ENCODE measurements at regions of chr17 and their contacts with region 1.

Region 1: DNA sequence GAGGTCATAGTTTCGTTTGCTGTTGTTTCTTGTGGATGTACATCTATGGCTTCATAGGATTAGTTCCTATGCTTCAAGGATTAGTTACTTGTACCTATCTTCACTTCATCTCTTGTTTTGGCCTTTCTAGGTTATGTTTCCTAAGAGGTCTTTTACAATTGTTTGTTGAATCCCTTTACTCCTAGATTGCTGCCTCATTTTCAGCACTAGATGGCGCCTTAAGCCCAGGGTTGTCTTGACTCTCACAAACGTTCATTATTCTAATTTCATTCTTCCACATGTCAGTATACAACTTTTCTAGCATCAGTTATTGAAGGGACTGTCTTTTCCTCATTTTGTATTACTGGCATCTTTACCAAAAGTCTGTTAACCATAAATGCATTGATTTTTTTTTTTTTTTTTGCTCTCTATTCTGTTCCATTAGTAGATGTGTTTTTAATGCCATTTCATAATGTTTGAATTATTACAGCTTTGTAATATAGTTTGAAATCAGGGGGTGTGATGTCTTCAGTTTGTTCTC is 45.0 kb upstream of the NACA2 start:
- DNase-seq: no peak
- H3K4me3 ChIP-seq: no peak overlapping the region
- CTCF ChIP-seq: peak; percentile 62

Region 2: GRCh38 chr17:61617330-61617729 is 18.6 kb before region 1 on chr17:
- CTCF ChIA-PET with region 1: interaction called, 10 read pairs
- POLR2A ChIA-PET with region 1: no interaction called
- DNase-seq: no peak
- H3K4me3 ChIP-seq: no peak overlapping the region
- CTCF ChIP-seq: no peak

Region 3: GRCh38 chr17:61647047-61647446 is 11.1 kb after region 1 on chr17:
- CTCF ChIA-PET with region 1: interaction called, 20 read pairs
- POLR2A ChIA-PET with region 1: no interaction called
- DNase-seq: peak; percentile 36
- H3K4me3 ChIP-seq: no peak overlapping the region
- CTCF ChIP-seq: no peak

Region 4: GRCh38 chr17:61659437-61659836 is 23.5 kb after region 1 on chr17:
- CTCF ChIA-PET with region 1: no interaction called
- POLR2A ChIA-PET with region 1: no interaction called
- DNase-seq: no peak
- H3K4me3 ChIP-seq: no peak overlapping the region
- CTCF ChIP-seq: no peak

Region 5: GRCh38 chr17:61750656-61751055 is 114.7 kb after region 1 on chr17:
- CTCF ChIA-PET with region 1: no interaction called
- POLR2A ChIA-PET with region 1: no interaction called
- DNase-seq: no peak
- H3K4me3 ChIP-seq: no peak overlapping the region
- CTCF ChIP-seq: no peak

Region 6: DNA sequence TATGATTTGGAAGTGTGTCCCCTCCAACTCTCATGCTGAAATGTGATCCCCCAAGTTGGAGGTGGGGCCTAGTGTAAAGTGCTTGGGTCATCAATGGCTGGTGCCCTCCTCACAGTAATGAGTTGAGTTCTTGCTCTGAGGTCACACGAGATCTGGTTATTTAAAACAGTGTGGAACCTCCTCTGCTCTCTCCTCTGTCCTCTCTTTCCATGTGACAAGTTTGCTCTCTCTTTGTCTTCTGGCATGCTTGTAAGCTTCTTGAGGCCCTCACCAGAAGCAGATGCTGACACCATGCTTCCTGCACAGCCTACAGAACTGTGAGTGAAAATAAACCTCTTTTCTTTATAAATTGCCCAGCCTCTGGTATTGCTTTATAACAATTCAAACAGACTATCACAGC is 207.5 kb after region 1 on chr17:
- CTCF ChIA-PET with region 1: interaction called, 50 read pairs
- POLR2A ChIA-PET with region 1: no interaction called
- DNase-seq: no peak
- H3K4me3 ChIP-seq: no peak overlapping the region
- CTCF ChIP-seq: no peak

Region 7: DNA sequence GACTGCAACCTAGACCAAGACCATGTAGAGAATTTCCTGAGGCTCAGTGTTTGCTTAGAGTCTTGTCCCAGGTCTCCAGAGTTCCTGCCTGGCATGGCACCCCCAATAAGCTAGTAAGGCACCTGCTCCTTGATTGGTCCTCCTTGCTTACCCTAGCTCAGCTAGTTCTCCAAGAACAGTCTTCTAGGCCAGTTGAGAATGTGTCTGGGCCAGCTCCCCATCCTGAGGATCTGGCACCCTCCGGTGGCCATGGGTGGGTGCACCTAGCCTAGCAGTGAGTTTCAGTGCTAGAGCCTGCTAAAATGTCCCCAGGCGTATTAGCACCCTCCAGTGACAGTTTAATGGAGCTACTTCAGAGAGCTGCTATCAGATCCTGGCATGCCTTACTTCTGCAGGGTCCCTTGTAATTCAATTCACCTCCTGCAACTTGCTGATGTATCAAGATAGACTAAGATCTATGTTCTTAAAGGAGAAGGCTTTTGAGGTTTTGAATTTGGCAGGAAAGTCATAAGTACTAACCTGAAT is 473.5 kb after region 1 on chr17:
- CTCF ChIA-PET with region 1: interaction called, 12 read pairs
- POLR2A ChIA-PET with region 1: no interaction called
- DNase-seq: peak; percentile 7
- H3K4me3 ChIP-seq: no peak overlapping the region
- CTCF ChIP-seq: peak; percentile 75